Activated CD4-positive, alpha-beta memory T cell treated with anti-CD3 and anti-CD28 coated beads for 36 hours (primary cell): ENCODE measurements at regions of chr17 and their contacts with region 1.

Region 1: GRCh38 chr17:76296186-76296585 is 11.9 kb downstream of the QRICH2 start:
- DNase-seq: no peak
- H3K4me3 Mint-ChIP-seq: no peak overlapping the region
- H3K27ac Mint-ChIP-seq: no peak overlapping the region
- H3K4me1 Mint-ChIP-seq: peaks cover 3% of the 10 kb centered on the region
- H3K27me3 Mint-ChIP-seq: no peaks in the 10 kb centered on the region

Region 2: DNA sequence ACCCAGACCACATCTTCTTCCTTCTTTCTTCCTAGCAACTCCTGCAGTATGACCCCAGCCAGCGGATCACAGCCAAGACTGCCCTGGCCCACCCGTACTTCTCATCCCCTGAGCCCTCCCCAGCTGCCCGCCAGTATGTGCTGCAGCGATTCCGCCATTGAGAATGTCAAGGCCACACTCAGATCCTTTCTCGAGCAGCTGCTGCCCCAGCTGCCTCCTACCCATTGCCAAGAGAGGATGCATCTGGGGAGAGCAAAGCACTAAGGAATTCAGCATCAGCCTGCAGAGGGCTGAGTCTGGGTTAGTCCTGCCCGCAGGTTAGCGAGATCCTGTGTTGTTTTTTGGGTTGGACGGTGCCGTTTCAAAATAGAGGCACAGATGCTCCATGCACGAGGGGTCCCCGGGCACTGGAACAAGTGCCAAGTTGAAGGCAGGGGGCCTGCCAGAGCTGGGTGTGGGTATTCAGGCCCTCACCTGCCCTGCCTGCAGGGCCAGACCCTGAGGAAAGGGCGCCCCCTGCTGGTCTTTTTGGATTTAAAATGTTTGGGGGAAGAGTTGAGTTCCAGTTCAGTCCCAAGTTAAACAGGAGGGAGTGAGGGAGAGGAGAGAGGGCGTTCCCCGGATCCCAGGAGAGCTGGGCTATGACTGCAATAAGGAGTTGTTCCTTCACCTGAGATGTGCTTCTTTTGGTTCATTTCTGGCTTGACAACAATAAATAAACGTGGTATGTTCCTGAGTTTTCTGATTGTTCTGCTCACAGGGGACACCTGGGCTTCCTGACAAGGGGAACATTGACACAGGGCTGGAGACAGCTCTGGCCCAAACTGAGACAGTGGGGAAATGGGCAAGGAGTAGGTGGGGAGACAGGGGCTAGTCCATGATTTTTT is 290.7 kb before region 1 on chr17:
- CTCF ChIA-PET with region 1: interaction called, 10 read pairs
- POLR2A ChIA-PET with region 1: no interaction called
- intact Hi-C with region 1: no loop called
- DNase-seq: peak; percentile 87
- H3K4me3 Mint-ChIP-seq: no peak overlapping the region
- H3K27ac Mint-ChIP-seq: no peak overlapping the region
- H3K4me1 Mint-ChIP-seq: no peaks in the 10 kb centered on the region
- H3K27me3 Mint-ChIP-seq: no peaks in the 10 kb centered on the region

Region 3: GRCh38 chr17:76121932-76122430 is 174.2 kb before region 1 on chr17:
- CTCF ChIA-PET with region 1: interaction called, 23 read pairs
- POLR2A ChIA-PET with region 1: no interaction called
- intact Hi-C with region 1: no loop called
- DNase-seq: peak; percentile 35
- H3K4me3 Mint-ChIP-seq: no peak overlapping the region
- H3K27ac Mint-ChIP-seq: no peak overlapping the region
- H3K4me1 Mint-ChIP-seq: peaks cover 9% of the 10 kb centered on the region
- H3K27me3 Mint-ChIP-seq: no peaks in the 10 kb centered on the region

Region 4: DNA sequence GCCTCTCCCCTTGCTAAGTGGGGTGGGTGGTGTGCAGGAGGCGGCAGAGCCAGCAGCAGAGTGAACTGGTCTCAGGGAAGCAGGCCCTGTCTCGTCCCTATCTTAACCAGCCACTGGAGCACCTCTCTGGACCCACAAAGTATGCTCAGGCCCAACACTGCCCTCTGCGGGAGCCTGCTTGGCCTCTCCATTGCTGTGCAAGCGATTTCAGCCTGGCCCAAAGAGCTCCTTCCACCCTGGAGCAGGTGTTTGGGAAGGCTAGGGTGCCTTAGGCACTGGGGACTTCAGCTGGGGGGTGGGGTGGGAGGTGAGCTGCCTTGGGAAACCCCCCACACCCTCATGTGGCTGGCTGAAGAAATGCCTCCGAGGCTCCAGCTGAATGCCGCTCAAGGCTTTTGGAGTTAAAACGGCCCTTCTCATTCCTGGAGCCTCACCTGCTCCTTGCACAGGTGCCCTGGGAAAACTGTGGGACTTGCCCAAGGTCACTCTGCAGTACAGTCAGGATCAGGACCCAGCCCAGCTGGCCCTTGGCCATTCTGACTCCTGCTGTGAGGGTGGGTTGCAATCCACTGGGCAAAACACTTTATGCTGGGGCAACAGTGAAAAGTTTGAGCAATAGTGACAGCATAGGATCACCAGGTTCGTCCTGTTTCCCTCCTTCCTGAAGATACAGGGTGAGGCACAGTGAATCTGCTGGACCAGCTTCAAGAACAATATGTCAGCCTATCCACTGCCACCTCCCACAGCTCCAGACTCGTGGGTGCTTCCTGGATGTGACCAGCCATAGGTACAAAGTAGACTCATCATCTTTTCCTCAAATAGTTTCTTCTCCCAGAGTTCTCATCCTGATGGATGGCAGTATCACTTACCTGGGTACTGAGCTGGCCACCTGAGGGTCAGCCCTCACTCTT is 162.6 kb after region 1 on chr17:
- CTCF ChIA-PET with region 1: no interaction called
- POLR2A ChIA-PET with region 1: no interaction called
- intact Hi-C with region 1: no loop called
- DNase-seq: peak; percentile 40
- H3K4me3 Mint-ChIP-seq: no peak overlapping the region
- H3K27ac Mint-ChIP-seq: no peak overlapping the region
- H3K4me1 Mint-ChIP-seq: no peaks in the 10 kb centered on the region
- H3K27me3 Mint-ChIP-seq: no peaks in the 10 kb centered on the region